H1 (cell line): ENCODE measurements at regions of chr9 and their contacts with region 1.

Region 1: GRCh38 chr9:8895861-8896224 is 1096.3 kb upstream of the DMAC1 start:
- DNase-seq: no peak
- H3K4me3 ChIP-seq: no peak overlapping the region
- H3K27ac ChIP-seq: no peak overlapping the region
- H3K4me1 ChIP-seq: peaks cover 0 to 2% (median 0%) of the 10 kb centered on the region in 4 experiments; a peak in 1 of 7 replicates
- H3K27me3 ChIP-seq: no peaks in the 10 kb centered on the region
- CTCF ChIP-seq: peak in 2 of 3 experiments; percentile 49 to 50; a peak in 3 of 4 replicates
- EP300 ChIP-seq: no peak
- POLR2A ChIP-seq: no peak
- RAD21 ChIP-seq: peak; percentile 75

Region 2: DNA sequence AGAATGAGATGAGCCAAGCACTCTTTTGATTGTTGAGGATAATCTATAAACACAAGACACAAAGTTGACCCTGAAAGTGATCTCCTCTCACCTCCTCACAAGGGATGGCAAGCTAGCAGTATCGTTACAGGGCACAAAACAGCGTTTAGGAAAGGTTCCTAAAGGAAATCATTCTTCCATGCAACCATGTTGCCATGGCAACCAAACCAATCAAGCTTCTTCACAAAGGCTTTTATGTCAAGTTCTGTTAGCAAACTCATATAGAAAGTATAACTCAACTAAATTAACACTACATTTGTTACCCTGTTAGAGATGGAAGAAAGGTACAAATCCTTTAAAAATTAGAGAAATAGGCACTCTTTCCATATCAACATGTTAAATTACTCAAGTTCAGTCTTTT is 79.5 kb before region 1 on chr9:
- CTCF ChIA-PET with region 1: no interaction called
- POLR2A ChIA-PET with region 1: no interaction called
- DNase-seq: no peak
- H3K4me3 ChIP-seq: no peak overlapping the region
- H3K27ac ChIP-seq: no peak overlapping the region
- H3K4me1 ChIP-seq: peaks cover 0 to 3% (median under 1%) of the 10 kb centered on the region in 4 experiments; a peak in 4 of 7 replicates
- H3K27me3 ChIP-seq: no peaks in the 10 kb centered on the region
- CTCF ChIP-seq: no peak
- EP300 ChIP-seq: no peak
- POLR2A ChIP-seq: no peak
- RAD21 ChIP-seq: no peak

Region 3: DNA sequence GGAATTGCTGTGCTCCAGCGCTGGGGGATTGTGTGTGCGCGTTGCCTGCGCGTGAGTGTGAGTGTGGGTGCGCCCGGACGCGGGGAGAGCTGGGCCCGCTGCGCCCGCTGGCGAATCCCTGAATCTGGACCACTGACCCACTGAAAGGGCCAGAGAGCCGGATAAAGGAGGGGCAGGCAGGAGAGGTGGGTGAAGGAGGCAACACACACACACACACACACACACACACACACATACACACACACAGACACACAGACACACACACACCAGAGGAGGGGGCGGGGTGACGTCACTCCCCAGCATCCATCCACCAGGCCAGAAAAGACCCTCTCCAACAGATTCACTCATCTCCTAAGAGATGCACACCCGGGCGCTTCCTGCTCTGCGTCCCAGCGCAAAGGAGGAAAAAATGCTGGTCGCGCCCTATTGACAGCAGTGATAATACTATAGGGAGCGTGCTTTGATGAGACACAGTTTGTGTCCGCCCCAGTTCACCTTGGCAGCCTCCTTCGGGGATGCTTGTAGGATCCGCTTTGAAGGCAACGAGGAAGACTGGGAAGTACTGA is 37.2 kb before region 1 on chr9:
- CTCF ChIA-PET with region 1: interaction called, 17 read pairs
- POLR2A ChIA-PET with region 1: no interaction called
- DNase-seq: peak in 1 of 2 experiments; percentile 61
- H3K4me3 ChIP-seq: peak overlapping the region; percentile 89 to 99 (median 94)
- H3K27ac ChIP-seq: no peak overlapping the region
- H3K4me1 ChIP-seq: peaks cover 2 to 14% (median 6%) of the 10 kb centered on the region in 4 experiments; a peak in 5 of 7 replicates
- H3K27me3 ChIP-seq: no peaks in the 10 kb centered on the region; a peak in 3 of 7 replicates
- CTCF ChIP-seq: no peak
- EP300 ChIP-seq: no peak
- POLR2A ChIP-seq: no peak
- RAD21 ChIP-seq: no peak

Region 4: DNA sequence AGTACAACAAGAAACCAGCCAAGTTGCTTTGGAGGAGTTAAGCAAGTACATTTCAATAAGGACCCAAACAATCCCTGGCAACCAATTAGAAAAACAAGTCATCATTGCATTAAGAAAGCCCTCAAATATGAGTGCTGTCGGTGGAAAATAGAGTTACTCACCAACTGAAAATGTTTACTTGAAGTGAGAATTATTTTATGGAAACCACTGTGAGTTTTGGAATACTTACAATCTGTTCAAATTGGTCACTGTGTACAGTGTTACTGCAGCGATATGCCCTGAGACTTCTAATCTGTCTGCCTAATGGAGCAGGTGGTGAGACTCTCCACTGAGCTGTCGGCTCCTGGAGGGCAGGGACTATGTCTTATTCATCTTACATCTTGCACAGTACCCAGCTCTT is 23.0 kb before region 1 on chr9:
- CTCF ChIA-PET with region 1: interaction called, 27 read pairs
- POLR2A ChIA-PET with region 1: no interaction called
- DNase-seq: no peak
- H3K4me3 ChIP-seq: no peak overlapping the region
- H3K27ac ChIP-seq: no peak overlapping the region
- H3K4me1 ChIP-seq: peaks cover 0 to 3% (median 2%) of the 10 kb centered on the region in 4 experiments; a peak in 4 of 7 replicates
- H3K27me3 ChIP-seq: no peaks in the 10 kb centered on the region
- CTCF ChIP-seq: no peak
- EP300 ChIP-seq: no peak
- POLR2A ChIP-seq: no peak
- RAD21 ChIP-seq: no peak

Region 5: DNA sequence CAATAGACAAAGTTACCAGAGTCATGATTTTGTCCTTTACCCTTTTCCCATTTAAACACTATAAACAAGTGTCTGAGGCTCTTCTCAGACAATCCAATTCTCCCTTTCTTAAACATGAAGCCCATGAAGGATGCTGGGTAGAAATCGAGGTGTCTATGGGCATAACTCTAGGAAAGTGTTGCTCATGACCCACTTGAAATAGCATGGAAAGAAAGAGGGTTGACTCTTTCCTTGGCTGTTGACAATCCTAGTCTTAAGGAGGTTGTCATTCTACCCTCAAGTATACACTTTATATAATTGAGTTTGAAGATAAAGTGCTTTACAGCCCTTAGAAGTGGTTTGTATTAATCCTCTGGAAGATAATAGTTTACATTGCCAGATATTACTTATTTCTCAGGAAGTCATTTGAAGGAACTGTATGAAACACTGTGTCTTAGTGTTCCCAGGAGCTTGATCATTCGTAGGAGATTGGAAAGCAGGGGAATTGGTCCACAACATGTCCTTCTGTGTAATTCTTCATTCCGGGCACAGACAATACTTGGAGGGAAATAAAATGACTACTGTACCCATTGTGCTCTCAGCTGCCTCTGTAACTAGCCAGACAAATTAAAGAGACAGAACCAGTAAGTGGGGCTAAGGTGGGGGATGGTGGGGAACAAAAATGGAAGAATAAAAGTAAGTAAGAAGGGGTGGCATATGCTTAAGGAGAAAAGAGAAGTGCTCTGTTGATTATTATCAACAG is 17.9 kb before region 1 on chr9:
- CTCF ChIA-PET with region 1: interaction called, 27 read pairs
- POLR2A ChIA-PET with region 1: no interaction called
- DNase-seq: no peak
- H3K4me3 ChIP-seq: no peak overlapping the region
- H3K27ac ChIP-seq: no peak overlapping the region
- H3K4me1 ChIP-seq: peaks cover 0 to 3% (median 1%) of the 10 kb centered on the region in 4 experiments; a peak in 2 of 7 replicates
- H3K27me3 ChIP-seq: no peaks in the 10 kb centered on the region
- CTCF ChIP-seq: no peak
- EP300 ChIP-seq: no peak
- POLR2A ChIP-seq: no peak
- RAD21 ChIP-seq: no peak

Region 6: DNA sequence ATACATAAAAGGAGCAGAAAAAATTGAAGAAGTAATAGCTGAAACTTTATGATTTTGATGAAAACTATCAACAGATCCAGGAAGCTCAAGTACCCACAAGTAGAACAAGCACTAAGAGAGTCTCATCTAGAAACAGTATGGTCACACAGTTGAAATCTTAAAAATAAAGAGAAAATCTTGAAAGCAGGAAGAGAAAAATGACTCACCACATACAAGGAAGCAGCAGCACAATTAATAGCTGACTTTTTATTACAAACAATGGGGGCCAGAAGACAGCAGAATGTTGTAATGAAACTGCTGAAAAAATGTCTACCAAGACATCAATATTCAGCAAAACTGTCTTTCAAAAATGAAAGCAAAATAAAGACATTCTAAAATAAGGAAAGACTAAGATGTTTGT is 12.0 kb after region 1 on chr9:
- CTCF ChIA-PET with region 1: interaction called, 21 read pairs
- POLR2A ChIA-PET with region 1: no interaction called
- DNase-seq: no peak
- H3K4me3 ChIP-seq: no peak overlapping the region
- H3K27ac ChIP-seq: no peak overlapping the region
- H3K4me1 ChIP-seq: no peaks in the 10 kb centered on the region
- H3K27me3 ChIP-seq: no peaks in the 10 kb centered on the region
- CTCF ChIP-seq: no peak
- EP300 ChIP-seq: no peak
- POLR2A ChIP-seq: no peak
- RAD21 ChIP-seq: no peak

Region 7: GRCh38 chr9:8940650-8941049 is 44.8 kb after region 1 on chr9:
- CTCF ChIA-PET with region 1: interaction called, 10 read pairs
- POLR2A ChIA-PET with region 1: no interaction called
- DNase-seq: no peak
- H3K4me3 ChIP-seq: no peak overlapping the region
- H3K27ac ChIP-seq: no peak overlapping the region
- H3K4me1 ChIP-seq: no peaks in the 10 kb centered on the region
- H3K27me3 ChIP-seq: no peaks in the 10 kb centered on the region
- CTCF ChIP-seq: no peak
- EP300 ChIP-seq: no peak
- POLR2A ChIP-seq: no peak
- RAD21 ChIP-seq: no peak